Activated naive CD4-positive, alpha-beta T cell treated with anti-CD3 and anti-CD28 coated beads, Interleukin-2, amount 10 ng/mL, durations not matched to agents 7 days and 5 days (primary cell): ENCODE measurements at regions of chr7 and their contacts with region 1.

Region 1: GRCh38 chr7:128209229-128210035 is 31.6 kb upstream of the LEP start:
- DNase-seq: peak; percentile 74
- H3K4me3 Mint-ChIP-seq: no peak overlapping the region
- H3K27ac Mint-ChIP-seq: no peak overlapping the region
- H3K4me1 Mint-ChIP-seq: no peaks in the 10 kb centered on the region
- H3K27me3 Mint-ChIP-seq: peaks cover 50% of the 10 kb centered on the region

Region 2: DNA sequence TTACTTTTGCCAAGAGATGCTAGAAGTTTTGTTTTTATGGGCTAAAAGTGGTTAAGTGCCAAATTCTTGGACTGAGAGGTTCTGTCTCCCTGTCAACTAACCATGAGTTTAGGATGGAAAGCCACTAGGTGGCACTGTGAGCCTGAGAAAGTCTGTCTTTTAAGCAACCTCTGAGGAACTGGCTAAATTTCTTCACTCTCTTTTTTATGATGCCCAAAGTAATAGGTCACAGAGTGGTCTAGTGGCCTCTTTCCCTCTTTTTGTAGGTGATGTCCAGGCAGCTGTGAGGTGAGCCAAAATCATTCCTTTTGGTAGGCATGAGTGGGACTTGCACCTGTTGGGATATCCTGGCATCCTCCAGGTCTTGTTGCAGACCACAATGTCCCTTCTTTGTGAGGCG is 500.6 kb before region 1 on chr7:
- CTCF ChIA-PET with region 1: interaction called, 161 read pairs
- DNase-seq: peak; percentile 85
- H3K4me3 Mint-ChIP-seq: no peak overlapping the region
- H3K27ac Mint-ChIP-seq: no peak overlapping the region
- H3K4me1 Mint-ChIP-seq: no peaks in the 10 kb centered on the region
- H3K27me3 Mint-ChIP-seq: no peaks in the 10 kb centered on the region

Region 3: DNA sequence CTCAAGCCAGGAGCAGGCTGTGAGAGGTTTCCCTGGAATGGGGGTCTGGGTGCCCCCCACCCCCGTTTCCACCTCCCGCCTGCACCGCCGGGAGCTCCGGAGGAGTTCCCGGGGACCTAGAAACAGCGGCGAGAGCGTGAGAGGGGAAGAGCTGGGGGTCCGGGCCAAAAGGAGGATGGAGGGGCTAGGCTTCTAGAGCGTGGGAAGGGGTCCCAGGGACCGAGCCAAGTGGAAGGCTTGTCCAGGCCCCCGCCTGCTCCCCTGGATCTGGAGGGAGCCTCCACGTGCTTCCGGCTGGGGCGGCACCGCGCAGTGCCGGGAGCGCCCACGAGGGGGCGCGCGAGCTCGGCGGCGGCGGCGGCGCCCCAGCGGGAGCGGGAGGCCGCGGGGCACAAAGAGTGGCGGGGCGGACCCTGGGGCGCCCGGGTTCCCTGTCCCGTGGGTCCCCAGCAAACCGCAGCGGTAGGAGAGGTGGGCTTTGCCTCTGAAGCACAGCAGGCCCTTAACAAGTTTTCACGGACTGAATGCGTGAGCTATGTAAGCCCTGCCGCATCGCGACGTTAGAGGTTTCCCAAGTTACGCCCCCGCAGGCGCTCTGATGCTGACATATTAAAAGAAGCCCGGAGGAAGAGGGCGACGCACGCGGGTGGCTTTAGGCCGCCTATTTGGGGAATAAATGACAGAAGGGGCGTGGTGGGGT is 73.8 kb before region 1 on chr7:
- CTCF ChIA-PET with region 1: interaction called, 83 read pairs
- DNase-seq: peak; percentile 63
- H3K4me3 Mint-ChIP-seq: peak overlapping the region; percentile 68
- H3K27ac Mint-ChIP-seq: no peak overlapping the region
- H3K4me1 Mint-ChIP-seq: peaks cover 14% of the 10 kb centered on the region
- H3K27me3 Mint-ChIP-seq: peaks cover 65% of the 10 kb centered on the region

Region 4: DNA sequence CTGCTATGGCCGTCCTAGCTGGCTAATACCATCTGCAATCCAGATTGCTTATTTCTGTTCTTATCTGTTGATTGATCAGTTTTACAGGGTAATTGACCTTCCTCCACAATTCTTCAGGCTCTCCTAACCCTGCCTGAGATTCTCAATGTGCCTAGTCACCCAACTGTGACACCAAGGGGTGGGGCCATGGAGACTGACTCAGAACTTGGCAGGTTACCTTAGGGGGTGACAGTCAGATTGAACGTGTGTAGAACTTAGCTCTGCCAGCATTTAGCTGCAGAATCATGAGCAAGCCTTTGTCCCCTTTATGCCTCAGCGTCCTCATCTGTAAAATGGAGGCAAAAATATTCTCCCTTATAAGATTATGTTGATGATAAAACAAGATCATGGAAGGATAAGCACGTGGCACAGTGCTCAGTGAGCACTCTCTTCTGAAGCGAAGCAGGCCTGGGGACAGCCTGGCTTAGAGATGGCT is 12.5 kb after region 1 on chr7:
- CTCF ChIA-PET with region 1: interaction called, 21 read pairs
- DNase-seq: no peak
- H3K4me3 Mint-ChIP-seq: no peak overlapping the region
- H3K27ac Mint-ChIP-seq: no peak overlapping the region
- H3K4me1 Mint-ChIP-seq: no peaks in the 10 kb centered on the region
- H3K27me3 Mint-ChIP-seq: peaks cover 62% of the 10 kb centered on the region

Region 5: GRCh38 chr7:128247676-128248194 is 38.3 kb after region 1 on chr7:
- CTCF ChIA-PET with region 1: no interaction called
- DNase-seq: no peak
- H3K4me3 Mint-ChIP-seq: no peak overlapping the region
- H3K27ac Mint-ChIP-seq: no peak overlapping the region
- H3K4me1 Mint-ChIP-seq: no peaks in the 10 kb centered on the region
- H3K27me3 Mint-ChIP-seq: peaks cover 30% of the 10 kb centered on the region

Region 6: DNA sequence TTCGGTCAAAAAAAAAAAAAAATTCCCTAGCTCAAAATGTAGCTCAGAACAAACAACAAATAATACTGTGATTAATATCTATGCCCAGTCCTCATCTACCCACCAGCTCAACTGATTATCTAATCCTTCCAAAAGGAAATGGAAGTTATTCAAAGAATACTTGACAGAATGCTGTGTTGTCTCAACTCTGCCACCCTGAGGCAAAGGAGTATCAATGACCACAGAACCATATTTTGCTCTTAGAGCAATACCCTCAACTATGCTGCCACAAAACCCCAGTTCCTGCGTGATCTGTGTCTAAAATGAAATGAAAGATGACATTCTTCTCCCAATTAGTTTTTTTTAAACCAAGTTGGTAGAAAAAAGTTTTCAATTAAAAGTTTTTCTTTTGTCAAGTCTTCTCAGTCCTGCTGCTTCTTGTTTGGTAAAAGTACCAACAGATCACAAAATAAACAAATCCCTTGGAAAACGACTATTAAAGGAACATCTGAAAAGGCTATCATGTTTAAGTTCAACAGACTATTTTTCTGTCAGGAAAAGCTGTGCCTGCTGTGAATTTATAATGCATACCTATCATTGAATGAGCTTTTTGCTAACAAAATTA is 112.7 kb after region 1 on chr7:
- CTCF ChIA-PET with region 1: interaction called, 27 read pairs
- DNase-seq: peak; percentile 36
- H3K4me3 Mint-ChIP-seq: no peak overlapping the region
- H3K27ac Mint-ChIP-seq: peak overlapping the region; percentile 1
- H3K4me1 Mint-ChIP-seq: peaks cover 30% of the 10 kb centered on the region
- H3K27me3 Mint-ChIP-seq: no peaks in the 10 kb centered on the region